K562 (cell line): ENCODE measurements at regions of chr17 and their contacts with region 1.

Region 1: DNA sequence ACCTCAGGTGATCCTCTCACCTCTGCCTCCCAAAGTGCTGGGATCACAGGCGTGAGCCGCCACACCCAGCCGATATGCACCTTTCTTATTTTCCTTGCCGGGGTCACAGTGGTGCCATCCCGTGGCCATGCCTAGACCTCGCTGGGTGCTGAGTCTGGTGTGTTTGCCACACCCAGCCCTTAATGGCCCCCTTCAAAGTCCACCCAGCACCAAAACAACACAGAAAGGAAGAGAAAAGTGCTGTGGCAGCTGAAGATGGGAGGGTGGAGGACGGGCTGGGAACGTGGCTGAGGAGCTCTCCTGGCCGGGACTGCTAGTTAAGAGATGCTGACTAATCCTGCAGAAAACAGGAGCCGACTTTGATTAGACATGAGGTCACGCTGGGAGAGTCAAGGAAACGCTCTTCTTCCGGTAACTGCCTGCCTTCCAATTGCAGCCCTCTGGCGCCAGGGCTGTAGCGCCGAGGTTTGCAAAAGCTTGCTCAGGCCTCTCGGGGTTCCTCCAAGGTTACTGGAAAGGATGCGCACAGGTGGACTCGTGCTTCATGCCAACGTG is 10.9 kb downstream of the SLC43A2 start:
- DNase-seq: peak; percentile 56 to 85 (median 68)
- ATAC-seq: peak; percentile 97
- H3K4me3 ChIP-seq: no peak overlapping the region
- H3K27ac ChIP-seq: peak overlapping the region; percentile 67
- H3K4me1 ChIP-seq: peaks cover 8 to 32% of the 10 kb centered on the region in 2 experiments; a peak in 4 of 5 replicates
- H3K27me3 ChIP-seq: no peaks in the 10 kb centered on the region
- CTCF ChIP-seq: peak in 1 of 3 experiments; percentile 3; a peak in 3 of 6 replicates
- EP300 ChIP-seq: peak; percentile 68; the same call in 1 of the 2 replicates
- POLR2A ChIP-seq: no peak
- RAD21 ChIP-seq: 0 out of 4 replicates have a peak, but pooled peaks of 1 of the 2 experiments have one; percentile 9

Region 2: DNA sequence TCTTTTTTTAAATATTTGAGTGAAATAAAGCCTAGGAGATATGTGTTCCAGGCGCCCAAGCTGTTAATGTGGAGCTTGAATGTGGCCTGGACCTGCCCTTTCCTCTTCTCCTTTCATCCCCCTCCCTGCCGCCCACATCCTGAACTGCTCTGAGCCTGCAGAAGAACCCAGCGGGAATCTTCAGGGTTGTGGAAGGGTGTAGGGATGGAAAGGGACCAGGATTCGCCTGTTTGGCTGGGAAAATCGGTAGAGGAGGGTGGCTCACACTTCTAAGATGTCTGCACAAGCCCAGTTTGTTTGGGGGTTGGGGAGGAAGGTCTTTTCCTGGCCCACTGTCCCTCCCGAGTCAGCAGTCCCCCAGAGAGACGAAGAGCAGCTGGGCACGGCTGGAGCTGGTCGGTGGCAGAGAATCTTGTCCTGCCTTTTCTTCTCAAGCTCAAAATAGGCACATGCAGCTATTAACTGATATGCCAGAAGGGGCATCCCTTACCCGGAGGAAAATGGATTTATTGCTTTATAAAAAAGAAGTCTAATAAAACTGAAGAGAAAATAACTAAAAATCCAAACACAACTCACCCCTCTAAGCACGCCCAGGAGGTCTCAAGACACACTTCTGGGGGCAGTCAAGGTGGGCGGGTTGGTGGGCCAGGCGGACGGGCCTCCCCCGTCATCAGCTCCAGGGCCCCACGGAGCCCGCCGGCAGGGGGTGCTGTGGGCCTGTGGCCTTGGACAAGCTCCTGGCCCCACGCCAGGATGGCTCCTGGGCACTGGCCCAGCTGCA is 43.6 kb before region 1 on chr17:
- CTCF ChIA-PET with region 1: interaction called, 3 read pairs
- POLR2A ChIA-PET with region 1: no interaction called
- in situ Hi-C with region 1: loop called (anchors 5 kb)
- intact Hi-C with region 1: no loop called
- DNase-seq: peak; percentile 82 to 89 (median 86)
- ATAC-seq: peak; percentile 91
- H3K4me3 ChIP-seq: no peak overlapping the region
- H3K27ac ChIP-seq: no peak overlapping the region
- H3K4me1 ChIP-seq: peaks cover 0 to 36% of the 10 kb centered on the region in 2 experiments; a peak in 3 of 5 replicates
- H3K27me3 ChIP-seq: no peaks in the 10 kb centered on the region
- CTCF ChIP-seq: peak; percentile 81 to 92 (median 84)
- EP300 ChIP-seq: no peak
- POLR2A ChIP-seq: no peak
- RAD21 ChIP-seq: peak; percentile 85 to 92

Region 3: DNA sequence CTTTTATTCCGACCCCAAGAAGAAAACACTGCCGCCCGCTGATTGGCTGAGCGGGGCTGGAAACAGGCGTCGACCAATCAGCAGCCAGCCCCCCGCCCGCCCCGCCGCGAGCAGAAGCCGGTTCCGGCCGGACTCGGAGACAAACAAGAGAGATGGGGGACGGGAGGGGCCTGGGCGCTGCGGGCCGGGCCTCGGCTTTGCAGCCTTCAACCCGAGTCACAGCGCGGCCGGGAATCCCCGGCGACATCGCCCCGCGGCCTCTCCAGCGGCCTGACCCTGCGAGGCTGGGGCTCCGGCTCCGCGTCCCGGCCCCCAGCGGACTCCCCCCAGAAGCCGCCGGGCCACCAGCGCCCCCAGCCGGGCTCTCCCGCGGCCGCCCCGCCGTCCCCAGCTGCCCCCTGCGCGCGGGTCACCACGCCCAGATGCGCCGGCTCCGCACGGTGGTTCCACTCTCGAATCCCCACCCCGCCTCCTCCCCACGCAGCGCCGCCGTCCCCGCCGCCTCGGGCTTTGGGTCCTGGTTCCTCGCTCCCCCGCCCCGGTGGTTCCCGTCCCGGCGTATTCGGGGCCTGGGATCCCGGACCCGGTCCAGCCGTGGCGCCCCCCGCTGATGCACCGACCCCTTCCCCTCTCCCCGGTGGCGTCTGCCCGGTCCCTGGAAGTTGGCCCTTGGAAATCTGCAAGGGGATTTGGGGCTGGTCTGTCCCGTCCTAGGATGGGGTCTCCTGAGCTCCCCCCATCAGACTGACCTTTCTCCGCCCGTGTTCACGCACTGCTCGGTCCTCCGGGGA is 11.4 kb after region 1 on chr17:
- CTCF ChIA-PET with region 1: no interaction called
- POLR2A ChIA-PET with region 1: interaction called, 25 read pairs
- in situ Hi-C with region 1: no loop called
- intact Hi-C with region 1: no loop called
- DNase-seq: peak; percentile 93 to 98 (median 94)
- ATAC-seq: peak; percentile 89
- H3K4me3 ChIP-seq: peak overlapping the region; percentile 66
- H3K27ac ChIP-seq: peak overlapping the region; percentile 92
- H3K4me1 ChIP-seq: peaks cover 9 to 36% of the 10 kb centered on the region in 2 experiments
- H3K27me3 ChIP-seq: no peaks in the 10 kb centered on the region
- CTCF ChIP-seq: peak; percentile 9 to 65 (median 41); a peak in 3 of 6 replicates
- EP300 ChIP-seq: no peak
- POLR2A ChIP-seq: no peak
- RAD21 ChIP-seq: peak; percentile 56 to 68